Spleen (tissue), 13 donors: ENCODE measurements at regions of chr10 and their contacts with region 1.

Region 1: GRCh38 chr10:5623081-5623748 is 43.2 kb downstream of the ASB13 start:
- DNase-seq: peak; percentile 95
- H3K4me3 ChIP-seq: no peak overlapping the region
- H3K27ac ChIP-seq: no peak overlapping the region
- H3K4me1 ChIP-seq: peaks cover 0 to 10% (median 6%) of the 10 kb centered on the region in 6 donors
- H3K27me3 ChIP-seq: no peaks in the 10 kb centered on the region
- CTCF ChIP-seq: peak; percentile 72 to 90 (median 86)
- POLR2A ChIP-seq: no peak

Region 2: DNA sequence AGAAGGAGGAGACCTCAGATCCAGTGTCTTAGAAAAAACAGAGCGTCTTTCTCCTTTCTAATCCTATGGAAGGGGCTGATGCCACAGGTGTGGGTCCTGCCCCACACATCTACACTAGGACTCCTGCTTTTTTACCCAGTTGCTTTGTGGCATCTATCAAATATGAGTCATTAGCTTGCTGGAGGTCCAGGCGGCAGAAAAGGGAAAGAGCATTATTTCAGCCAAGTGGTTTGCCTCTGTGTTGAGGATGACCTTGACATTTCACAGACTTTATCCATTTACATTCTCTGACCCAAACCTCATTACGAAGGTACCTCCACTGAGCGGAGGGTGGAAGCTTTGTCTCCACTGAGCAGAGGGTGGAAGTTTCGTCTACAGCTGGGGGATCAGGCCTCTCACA is 1529.8 kb before region 1 on chr10:
- intact Hi-C with region 1: no loop called
- DNase-seq: no peak
- H3K4me3 ChIP-seq: no peak overlapping the region
- H3K27ac ChIP-seq: no peak overlapping the region
- H3K4me1 ChIP-seq: no peaks in the 10 kb centered on the region
- H3K27me3 ChIP-seq: no peaks in the 10 kb centered on the region
- CTCF ChIP-seq: no peak
- POLR2A ChIP-seq: no peak

Region 3: DNA sequence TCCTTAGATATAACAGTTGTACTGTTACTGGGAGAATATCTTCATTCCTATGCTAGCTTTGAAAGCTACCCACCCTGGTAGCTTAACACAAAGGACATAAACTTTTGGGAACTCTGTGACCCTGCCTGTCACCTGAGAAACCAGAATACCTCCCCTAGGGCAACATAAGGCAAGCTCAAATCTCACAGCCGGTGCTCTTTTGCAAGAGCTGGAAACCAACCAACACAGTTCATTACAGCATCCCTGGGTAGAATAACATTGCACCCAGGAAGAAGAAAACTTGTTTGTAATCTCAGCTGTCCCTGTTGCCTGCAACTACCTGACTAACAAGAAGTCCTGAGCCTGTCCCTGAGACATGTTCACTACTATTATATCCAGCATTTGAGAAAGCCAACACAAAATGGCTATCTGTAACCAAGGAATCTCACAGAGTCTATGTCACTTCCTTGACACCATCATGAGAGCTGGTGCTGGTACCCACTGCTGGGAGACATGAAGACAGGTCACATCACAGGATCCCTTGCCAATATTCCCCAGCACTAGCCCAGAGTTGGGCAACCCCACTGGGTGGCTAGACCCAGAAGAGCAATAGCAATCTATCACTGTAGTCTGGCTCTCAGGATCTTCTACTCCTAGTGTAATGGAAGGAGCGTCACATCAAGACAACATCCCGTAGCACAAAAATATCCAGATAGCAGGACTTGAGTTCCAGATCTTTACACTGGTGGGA is 497.7 kb before region 1 on chr10:
- intact Hi-C with region 1: no loop called
- DNase-seq: no peak
- H3K4me3 ChIP-seq: no peak overlapping the region
- H3K27ac ChIP-seq: no peak overlapping the region
- H3K4me1 ChIP-seq: no peaks in the 10 kb centered on the region
- H3K27me3 ChIP-seq: no peaks in the 10 kb centered on the region
- CTCF ChIP-seq: no peak
- POLR2A ChIP-seq: no peak

Region 4: GRCh38 chr10:5446390-5446926 is 176.8 kb before region 1 on chr10:
- intact Hi-C with region 1: loop called (anchors 2 kb)
- DNase-seq: peak; percentile 95
- H3K4me3 ChIP-seq: peak overlapping the region; percentile 10 to 65 (median 29)
- H3K27ac ChIP-seq: peak overlapping the region in 4 of 8 donors; percentile 53 to 64 (median 62)
- H3K4me1 ChIP-seq: peaks cover 0 to 49% (median 25%) of the 10 kb centered on the region in 6 donors
- H3K27me3 ChIP-seq: no peaks in the 10 kb centered on the region
- CTCF ChIP-seq: no peak
- POLR2A ChIP-seq: peak in 1 of 3 donors; percentile 50

Region 5: DNA sequence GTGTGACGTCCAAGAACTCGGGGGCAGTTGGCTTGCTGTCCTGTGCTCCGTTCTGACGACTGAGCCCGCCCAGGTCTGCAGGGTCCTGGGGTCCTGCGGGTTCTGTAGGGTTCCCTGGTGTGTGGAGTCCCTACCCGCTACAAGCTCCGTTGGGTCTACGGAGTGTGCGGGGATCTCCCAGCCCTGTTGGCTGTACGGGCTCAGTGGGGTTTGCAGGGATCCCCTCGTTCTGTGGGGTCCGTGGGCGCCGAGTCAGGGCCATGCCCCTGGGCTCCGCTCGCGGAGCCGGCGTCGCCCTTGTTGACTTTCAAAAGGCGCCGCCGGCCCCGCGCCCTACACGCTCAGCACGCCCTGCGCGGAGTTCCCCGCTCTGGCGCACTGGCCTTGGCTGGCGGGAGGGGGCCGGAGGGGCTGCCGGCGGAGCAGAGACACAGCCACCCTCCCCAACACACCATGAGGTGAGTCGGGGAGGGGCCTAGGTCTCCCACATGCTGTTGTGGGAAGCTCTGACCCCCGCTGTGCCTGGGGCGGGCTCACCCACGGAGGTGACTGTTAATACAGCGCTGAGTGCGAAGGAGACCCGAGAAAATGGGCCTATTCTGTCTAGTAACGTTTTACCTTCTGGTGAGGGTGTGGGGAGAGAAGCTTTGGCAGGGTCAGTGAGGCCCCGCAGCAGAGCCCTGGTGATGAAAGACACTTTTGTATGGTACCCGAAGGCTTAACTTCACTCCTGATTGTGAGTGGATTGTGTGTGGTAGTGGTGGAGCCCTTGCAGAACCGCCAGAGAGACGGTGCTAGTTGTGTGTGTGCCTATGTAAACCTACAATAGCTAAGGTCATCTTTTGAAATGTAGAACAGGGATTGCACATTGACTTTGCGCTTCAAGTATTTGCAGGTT is 69.5 kb after region 1 on chr10:
- intact Hi-C with region 1: no loop called
- DNase-seq: peak; percentile 91
- H3K4me3 ChIP-seq: peak overlapping the region; percentile 18 to 70 (median 42)
- H3K27ac ChIP-seq: peak overlapping the region in 7 of 8 donors; percentile 59 to 83 (median 77)
- H3K4me1 ChIP-seq: peaks cover 24 to 97% (median 75%) of the 10 kb centered on the region in 6 donors
- H3K27me3 ChIP-seq: no peaks in the 10 kb centered on the region
- CTCF ChIP-seq: no peak
- POLR2A ChIP-seq: no peak

Region 6: GRCh38 chr10:5723692-5724091 is 100.5 kb after region 1 on chr10:
- intact Hi-C with region 1: no loop called
- DNase-seq: no peak
- H3K4me3 ChIP-seq: no peak overlapping the region
- H3K27ac ChIP-seq: no peak overlapping the region
- H3K4me1 ChIP-seq: peaks cover 0 to 4% (median 0%) of the 10 kb centered on the region in 6 donors
- H3K27me3 ChIP-seq: no peaks in the 10 kb centered on the region
- CTCF ChIP-seq: no peak
- POLR2A ChIP-seq: no peak